Thyroid gland (tissue), 4 donors: ENCODE measurements at regions of chr4 and their contacts with region 1.

Region 1: GRCh38 chr4:81471588-81472288 is at the start of gene RASGEF1B:
- DNase-seq: peak; percentile 93
- H3K4me3 ChIP-seq: peak within 1 kb of the TSS; percentile 30 to 83 (median 71)
- H3K27ac ChIP-seq: peak within 1 kb of the TSS; percentile 74 to 89 (median 88)
- H3K4me1 ChIP-seq: peaks cover 14 to 19% of the 10 kb centered on the region in 2 donors
- H3K27me3 ChIP-seq: no peaks in the 10 kb centered on the region
- CTCF ChIP-seq: no peak
- POLR2A ChIP-seq: peak; percentile 7 to 79
- total RNA-seq, gene RASGEF1B: 4.3 to 15.5 (median 10.2) TPM

Region 2: GRCh38 chr4:81392164-81392563 is 79.6 kb before region 1 on chr4:
- intact Hi-C with region 1: no loop called
- DNase-seq: no peak
- H3K4me3 ChIP-seq: no peak overlapping the region
- H3K27ac ChIP-seq: no peak overlapping the region
- H3K4me1 ChIP-seq: no peaks in the 10 kb centered on the region
- H3K27me3 ChIP-seq: no peaks in the 10 kb centered on the region
- CTCF ChIP-seq: no peak
- POLR2A ChIP-seq: no peak

Region 3: DNA sequence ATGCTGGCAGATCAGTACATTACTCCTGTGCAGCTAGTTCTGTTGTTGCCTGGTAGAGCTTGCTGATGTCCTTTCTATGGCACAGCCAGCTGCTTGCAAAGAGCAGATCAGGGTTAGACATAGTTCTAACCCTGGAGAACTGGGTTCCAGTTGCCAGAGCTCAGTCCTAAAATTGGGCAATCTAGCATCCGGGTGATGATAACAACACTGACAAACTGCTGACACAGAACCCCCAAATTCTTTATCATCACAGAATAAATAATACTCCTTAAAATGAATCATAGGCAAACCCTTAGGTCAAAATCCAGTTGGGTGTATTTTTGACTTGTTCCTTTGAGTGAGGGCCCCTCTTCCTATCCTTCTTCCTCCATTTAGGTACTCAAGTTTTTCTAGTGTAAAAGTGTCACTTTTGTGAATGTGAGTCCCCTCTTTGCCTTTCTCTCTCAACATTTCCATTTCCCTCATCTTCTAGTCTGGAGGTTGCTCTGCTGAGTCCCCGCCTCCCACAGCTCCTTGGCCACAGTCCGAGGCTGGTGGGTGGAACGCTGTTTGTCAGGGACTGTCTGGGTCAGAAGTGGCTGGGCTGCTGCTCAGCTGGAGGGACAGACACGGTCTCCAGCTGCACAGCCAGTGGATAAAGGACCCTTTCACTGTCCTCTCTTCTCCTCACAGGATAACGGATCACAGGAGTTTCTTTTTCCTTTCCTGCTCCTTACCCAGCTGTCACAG is 93.6 kb after region 1 on chr4:
- intact Hi-C with region 1: no loop called
- DNase-seq: peak; percentile 69 to 84
- H3K4me3 ChIP-seq: peak overlapping the region in 1 of 3 donors; percentile 2
- H3K27ac ChIP-seq: peak overlapping the region; percentile 23 to 56 (median 34)
- H3K4me1 ChIP-seq: peaks cover 0 to 7% of the 10 kb centered on the region in 2 donors
- H3K27me3 ChIP-seq: no peaks in the 10 kb centered on the region
- CTCF ChIP-seq: no peak
- POLR2A ChIP-seq: no peak

Region 4: DNA sequence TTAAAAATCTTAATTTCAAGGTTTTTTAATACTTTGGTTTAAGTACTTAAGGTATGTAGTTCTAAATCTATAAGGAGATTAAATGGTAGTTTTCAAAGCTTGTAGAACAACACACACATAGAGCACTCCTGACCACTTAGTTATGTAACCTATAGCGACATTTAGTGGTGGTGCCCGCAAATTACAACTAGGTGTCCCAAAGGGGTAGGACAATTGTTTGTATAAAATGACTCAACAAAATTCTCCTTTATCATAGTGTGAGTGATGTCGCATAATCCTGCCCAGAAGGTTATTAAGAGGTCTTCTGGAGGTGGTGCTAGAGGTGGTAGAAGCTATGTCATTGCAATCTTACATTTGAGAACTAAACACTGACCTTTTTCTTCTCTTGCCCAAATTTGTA is 373.0 kb after region 1 on chr4:
- intact Hi-C with region 1: loop called (anchors 2 kb)
- DNase-seq: peak; percentile 76 to 78
- H3K4me3 ChIP-seq: no peak overlapping the region
- H3K27ac ChIP-seq: no peak overlapping the region
- H3K4me1 ChIP-seq: no peaks in the 10 kb centered on the region
- H3K27me3 ChIP-seq: no peaks in the 10 kb centered on the region
- CTCF ChIP-seq: peak; percentile 53 to 89 (median 76)
- POLR2A ChIP-seq: no peak